ENCODE measurements at regions of chr1 and their contacts with region 1.

Region 1: GRCh38 chr1:114979278-114979891 is 50.2 kb upstream of the TSHB start:
- DNase-seq: peak in 1 of 2 donors; percentile 67
- ATAC-seq: peak; percentile 36

Region 2: DNA sequence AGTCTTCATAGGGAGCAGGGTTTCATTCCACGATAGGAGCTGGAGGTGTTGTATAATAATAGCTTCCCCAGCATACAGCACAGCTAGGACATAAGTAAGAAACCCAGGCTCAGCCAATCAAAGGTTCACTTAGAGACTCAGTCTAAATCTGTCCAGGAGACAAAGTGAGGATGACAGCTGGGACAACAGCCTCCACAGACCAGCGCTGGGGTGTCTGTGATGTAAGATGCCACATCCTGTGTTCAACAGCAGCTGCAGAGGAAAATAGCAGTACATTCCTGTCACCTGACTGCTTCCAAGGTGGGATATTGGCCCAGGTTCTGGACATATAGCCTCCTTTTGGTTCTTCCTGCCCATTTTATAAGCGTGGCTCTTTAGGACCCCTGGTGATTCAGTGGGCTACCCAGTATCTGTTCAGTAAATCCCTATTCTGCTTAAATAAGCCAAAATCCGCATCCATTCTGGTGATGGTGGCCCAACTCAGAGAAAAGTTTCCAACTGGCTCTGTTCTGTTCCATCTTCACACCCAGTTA is 648.9 kb before region 1 on chr1:
- intact Hi-C with region 1: no loop called
- DNase-seq: no peak
- ATAC-seq: no peak

Region 3: DNA sequence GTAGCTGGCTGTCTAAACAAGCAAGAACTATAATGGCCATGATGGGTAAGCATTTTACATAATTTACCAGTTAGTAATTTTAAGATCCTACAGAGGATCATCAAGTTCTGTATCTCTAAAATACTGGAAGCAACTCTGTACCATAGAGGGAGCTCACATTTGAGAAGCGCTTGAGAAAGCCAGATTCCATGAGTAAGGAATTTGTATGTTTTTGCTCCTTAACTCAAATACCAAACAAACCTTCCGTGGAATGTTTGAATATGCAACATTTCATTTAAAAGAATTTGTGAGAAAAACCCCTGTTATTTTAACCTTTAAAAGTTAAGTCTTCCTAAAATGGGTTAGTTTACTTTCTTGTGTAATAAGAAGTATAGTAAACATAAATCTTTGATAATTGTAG is 52.2 kb after region 1 on chr1:
- intact Hi-C with region 1: no loop called
- DNase-seq: no peak
- ATAC-seq: no peak

Region 4: GRCh38 chr1:115112496-115113375 is 133.4 kb after region 1 on chr1:
- intact Hi-C with region 1: loop called (anchors 2 to 10 kb)
- DNase-seq: peak in 1 of 2 donors; percentile 39
- ATAC-seq: peak; percentile 49

Region 5: DNA sequence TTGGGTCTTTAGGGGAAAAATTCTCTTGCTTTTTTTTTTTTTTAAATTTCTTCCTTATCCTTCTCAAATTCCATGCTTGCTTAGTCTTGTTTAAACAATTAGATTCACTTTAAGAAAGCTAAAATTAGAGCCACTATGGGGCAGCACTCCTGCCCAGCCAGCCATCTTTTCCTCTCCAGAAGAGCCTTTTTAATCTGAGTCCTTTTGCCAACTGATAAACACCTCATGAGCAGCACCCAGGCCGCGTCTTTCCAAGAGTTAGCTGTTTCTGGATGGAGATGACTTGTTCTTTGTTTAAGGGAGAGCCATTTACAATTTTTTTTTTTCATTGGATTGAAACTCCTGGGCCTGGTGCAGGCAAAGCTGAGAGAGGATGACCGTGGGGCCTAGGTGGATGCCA is 163.2 kb after region 1 on chr1:
- intact Hi-C with region 1: no loop called
- DNase-seq: no peak
- ATAC-seq: no peak

Region 6: GRCh38 chr1:115258302-115258866 is 279.0 kb after region 1 on chr1:
- intact Hi-C with region 1: no loop called
- DNase-seq: no peak
- ATAC-seq: no peak

Region 7: GRCh38 chr1:115595279-115596079 is 616.1 kb after region 1 on chr1:
- intact Hi-C with region 1: loop called in 1 of 2 experiments (anchors 5 kb)
- DNase-seq: peak; percentile 63 to 84
- ATAC-seq: peak; percentile 84